A549 (cell line): ENCODE measurements at regions of chr2 and their contacts with region 1.

Region 1: GRCh38 chr2:10043906-10044601 is 704 bp downstream of the KLF11 start:
- DNase-seq: peak; percentile 79 to 93
- ATAC-seq: peak; percentile 48 to 61
- H3K4me3 ChIP-seq: peak overlapping the region; percentile 89
- H3K27ac ChIP-seq: peak overlapping the region; percentile 87 to 90
- H3K4me1 ChIP-seq: no peaks in the 10 kb centered on the region; the same call in 2 of the 3 replicates
- CTCF ChIP-seq: no peak
- EP300 ChIP-seq: no peak
- POLR2A ChIP-seq: no peak
- RAD21 ChIP-seq: no peak

Region 2: GRCh38 chr2:9805435-9806326 is 238.4 kb before region 1 on chr2:
- CTCF ChIA-PET with region 1: interaction called, 149 read pairs
- POLR2A ChIA-PET with region 1: no interaction called
- DNase-seq: no peak
- ATAC-seq: no peak
- H3K4me3 ChIP-seq: no peak overlapping the region
- H3K27ac ChIP-seq: no peak overlapping the region
- H3K4me1 ChIP-seq: peaks cover 19% of the 10 kb centered on the region
- CTCF ChIP-seq: no peak
- EP300 ChIP-seq: no peak
- POLR2A ChIP-seq: no peak
- RAD21 ChIP-seq: no peak

Region 3: DNA sequence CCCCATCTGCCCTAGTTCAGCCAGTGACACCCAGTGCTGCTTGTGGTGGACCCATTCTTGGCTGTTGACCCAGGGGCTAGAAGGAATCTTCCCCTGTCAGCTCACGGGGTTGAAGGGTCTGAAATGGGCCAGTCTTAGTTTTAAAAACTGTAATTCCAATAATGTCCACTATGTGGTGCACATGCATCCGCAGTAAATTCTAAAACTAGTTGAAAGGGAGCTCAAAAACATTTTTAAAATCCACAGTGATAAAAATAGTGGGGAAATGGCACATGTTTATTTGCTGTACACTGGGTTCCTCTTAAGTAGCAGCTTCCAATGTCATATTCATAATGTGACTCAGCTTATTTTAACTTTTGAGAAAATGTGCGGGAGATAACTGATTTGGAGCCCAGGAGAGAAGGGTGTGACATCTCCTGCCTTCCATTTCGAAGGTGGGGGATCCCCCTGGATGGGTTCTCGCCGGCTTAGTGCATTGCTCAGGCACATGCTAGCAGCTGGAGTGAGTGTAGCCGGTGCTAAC is 59.8 kb before region 1 on chr2:
- CTCF ChIA-PET with region 1: interaction called, 117 read pairs
- POLR2A ChIA-PET with region 1: interaction called, 7 read pairs
- DNase-seq: peak; percentile 46 to 90
- ATAC-seq: peak; percentile 63 to 89
- H3K4me3 ChIP-seq: no peak overlapping the region
- H3K27ac ChIP-seq: no peak overlapping the region
- H3K4me1 ChIP-seq: 0 out of 3 replicates have a peak, but pooled peaks cover 3% of the 10 kb centered on the region
- CTCF ChIP-seq: peak; percentile 77
- EP300 ChIP-seq: no peak
- POLR2A ChIP-seq: no peak
- RAD21 ChIP-seq: peak; percentile 61 to 66

Region 4: GRCh38 chr2:10028988-10029874 is 14.8 kb before region 1 on chr2:
- CTCF ChIA-PET with region 1: interaction called, 80 read pairs
- POLR2A ChIA-PET with region 1: no interaction called
- DNase-seq: no peak
- ATAC-seq: no peak; a peak in 1 of 6 replicates
- H3K4me3 ChIP-seq: no peak overlapping the region
- H3K27ac ChIP-seq: no peak overlapping the region
- H3K4me1 ChIP-seq: no peaks in the 10 kb centered on the region
- CTCF ChIP-seq: no peak
- EP300 ChIP-seq: no peak
- POLR2A ChIP-seq: no peak
- RAD21 ChIP-seq: no peak

Region 5: GRCh38 chr2:10064932-10065772 is 21.1 kb after region 1 on chr2:
- CTCF ChIA-PET with region 1: interaction called, 54 read pairs
- POLR2A ChIA-PET with region 1: no interaction called
- DNase-seq: no peak
- ATAC-seq: no peak
- H3K4me3 ChIP-seq: no peak overlapping the region
- H3K27ac ChIP-seq: no peak overlapping the region
- H3K4me1 ChIP-seq: no peaks in the 10 kb centered on the region
- CTCF ChIP-seq: no peak
- EP300 ChIP-seq: no peak
- POLR2A ChIP-seq: no peak
- RAD21 ChIP-seq: no peak

Region 6: GRCh38 chr2:10097352-10098148 is 53.5 kb after region 1 on chr2:
- CTCF ChIA-PET with region 1: interaction called, 12 read pairs
- POLR2A ChIA-PET with region 1: no interaction called
- DNase-seq: peak; percentile 70 to 97
- ATAC-seq: peak; percentile 97 to 99
- H3K4me3 ChIP-seq: no peak overlapping the region
- H3K27ac ChIP-seq: no peak overlapping the region
- H3K4me1 ChIP-seq: peaks cover 5% of the 10 kb centered on the region
- CTCF ChIP-seq: peak; percentile 88
- EP300 ChIP-seq: no peak
- POLR2A ChIP-seq: no peak
- RAD21 ChIP-seq: peak; percentile 81 to 86